ENCODE measurements at regions of chr2 and their contacts with region 1.

Region 1: DNA sequence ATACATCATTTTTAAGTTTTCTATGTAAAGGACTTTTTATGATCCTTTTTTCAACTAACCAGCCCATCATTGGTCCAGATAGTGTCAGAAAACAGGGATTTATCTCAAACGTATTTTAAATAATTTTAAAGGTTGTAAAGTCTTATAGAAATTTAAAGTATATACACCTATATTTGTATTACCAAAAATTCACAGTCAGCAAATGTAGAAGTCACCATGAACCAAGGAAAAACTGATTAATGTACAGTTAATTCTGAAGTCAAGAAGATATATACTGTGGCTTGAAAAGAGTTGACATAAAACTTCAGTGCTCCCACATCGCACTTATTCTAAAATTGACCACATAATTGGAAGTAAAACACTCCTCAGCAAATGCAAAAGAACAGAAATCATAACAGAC is 52.4 kb upstream of the MAP2 start:
- DNase-seq: no peak
- H3K4me3 ChIP-seq: no peak overlapping the region
- H3K27ac ChIP-seq: no peak overlapping the region
- H3K4me1 ChIP-seq: peaks cover 0 to 13% (median 5%) of the 10 kb centered on the region in 4 donors
- H3K27me3 ChIP-seq: no peaks in the 10 kb centered on the region
- CTCF ChIP-seq: no peak

Region 2: DNA sequence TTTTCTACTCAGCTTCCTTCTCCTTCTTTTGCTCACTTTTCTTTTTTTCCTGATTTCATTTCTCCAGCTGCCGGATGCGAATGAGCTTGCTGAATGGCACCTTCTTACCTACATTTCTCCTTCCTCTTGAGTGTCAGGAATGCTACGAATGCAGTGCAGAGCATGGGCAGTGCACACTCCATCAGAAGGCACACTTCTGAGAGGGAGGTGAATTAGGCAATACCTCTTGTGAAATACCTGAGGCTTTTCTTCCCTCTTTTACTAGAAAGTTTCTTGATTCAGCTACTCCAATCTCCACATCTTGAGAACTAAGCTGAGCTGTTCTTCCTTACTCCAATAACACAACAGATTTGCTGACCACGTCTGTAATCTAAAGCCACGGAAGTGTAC is 1397.2 kb before region 1 on chr2:
- intact Hi-C with region 1: loop called (anchors 10 kb)
- DNase-seq: no peak
- H3K4me3 ChIP-seq: no peak overlapping the region
- H3K27ac ChIP-seq: no peak overlapping the region
- H3K4me1 ChIP-seq: peaks cover 0 to 13% (median 4%) of the 10 kb centered on the region in 4 donors
- H3K27me3 ChIP-seq: no peaks in the 10 kb centered on the region
- CTCF ChIP-seq: no peak

Region 3: DNA sequence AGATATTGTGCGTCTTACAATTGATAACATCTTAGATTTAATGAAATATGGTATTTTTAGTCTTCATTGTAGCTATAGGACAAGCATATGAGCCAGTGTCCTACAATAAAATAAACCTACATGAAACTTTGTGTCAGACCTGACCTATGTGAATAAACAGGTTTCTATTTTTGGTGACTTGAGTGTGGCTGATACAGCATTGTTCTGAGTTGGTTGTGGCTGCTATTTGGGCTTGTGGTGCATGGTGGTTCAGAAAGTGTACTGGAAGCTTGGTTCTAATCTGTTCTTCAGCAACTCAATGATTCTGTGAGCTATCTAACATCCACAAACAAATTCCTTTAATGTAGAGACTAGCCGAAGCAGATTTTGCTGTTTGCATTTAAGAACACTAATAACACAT is 12.4 kb before region 1 on chr2:
- intact Hi-C with region 1: no loop called
- DNase-seq: no peak
- H3K4me3 ChIP-seq: no peak overlapping the region
- H3K27ac ChIP-seq: no peak overlapping the region
- H3K4me1 ChIP-seq: no peaks in the 10 kb centered on the region
- H3K27me3 ChIP-seq: no peaks in the 10 kb centered on the region
- CTCF ChIP-seq: no peak

Region 4: DNA sequence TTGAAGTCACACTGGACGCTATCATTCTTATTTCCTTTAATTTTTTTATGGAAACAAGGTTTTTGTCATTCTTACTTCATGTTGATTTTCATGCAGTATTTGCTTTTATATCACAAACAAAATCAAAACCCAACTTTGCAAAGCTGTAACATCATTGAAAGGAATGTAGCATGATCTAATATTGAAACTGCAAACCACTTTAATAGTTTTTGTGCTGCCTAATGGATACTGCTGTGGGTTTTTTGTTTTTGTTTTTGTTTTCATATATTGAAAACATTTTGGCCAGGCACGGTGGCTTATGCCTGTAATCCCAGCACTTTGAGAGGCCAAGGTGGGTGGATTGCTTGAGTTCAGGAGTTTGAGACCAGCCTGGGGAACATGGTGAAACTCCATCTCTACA is 134.0 kb after region 1 on chr2:
- intact Hi-C with region 1: no loop called
- DNase-seq: no peak
- H3K4me3 ChIP-seq: no peak overlapping the region
- H3K27ac ChIP-seq: peak overlapping the region; percentile 36 to 46
- H3K4me1 ChIP-seq: peaks cover 0 to 17% (median 0%) of the 10 kb centered on the region in 4 donors
- H3K27me3 ChIP-seq: no peaks in the 10 kb centered on the region
- CTCF ChIP-seq: no peak